ENCODE measurements at regions of chr20 and their contacts with region 1.

Region 1: DNA sequence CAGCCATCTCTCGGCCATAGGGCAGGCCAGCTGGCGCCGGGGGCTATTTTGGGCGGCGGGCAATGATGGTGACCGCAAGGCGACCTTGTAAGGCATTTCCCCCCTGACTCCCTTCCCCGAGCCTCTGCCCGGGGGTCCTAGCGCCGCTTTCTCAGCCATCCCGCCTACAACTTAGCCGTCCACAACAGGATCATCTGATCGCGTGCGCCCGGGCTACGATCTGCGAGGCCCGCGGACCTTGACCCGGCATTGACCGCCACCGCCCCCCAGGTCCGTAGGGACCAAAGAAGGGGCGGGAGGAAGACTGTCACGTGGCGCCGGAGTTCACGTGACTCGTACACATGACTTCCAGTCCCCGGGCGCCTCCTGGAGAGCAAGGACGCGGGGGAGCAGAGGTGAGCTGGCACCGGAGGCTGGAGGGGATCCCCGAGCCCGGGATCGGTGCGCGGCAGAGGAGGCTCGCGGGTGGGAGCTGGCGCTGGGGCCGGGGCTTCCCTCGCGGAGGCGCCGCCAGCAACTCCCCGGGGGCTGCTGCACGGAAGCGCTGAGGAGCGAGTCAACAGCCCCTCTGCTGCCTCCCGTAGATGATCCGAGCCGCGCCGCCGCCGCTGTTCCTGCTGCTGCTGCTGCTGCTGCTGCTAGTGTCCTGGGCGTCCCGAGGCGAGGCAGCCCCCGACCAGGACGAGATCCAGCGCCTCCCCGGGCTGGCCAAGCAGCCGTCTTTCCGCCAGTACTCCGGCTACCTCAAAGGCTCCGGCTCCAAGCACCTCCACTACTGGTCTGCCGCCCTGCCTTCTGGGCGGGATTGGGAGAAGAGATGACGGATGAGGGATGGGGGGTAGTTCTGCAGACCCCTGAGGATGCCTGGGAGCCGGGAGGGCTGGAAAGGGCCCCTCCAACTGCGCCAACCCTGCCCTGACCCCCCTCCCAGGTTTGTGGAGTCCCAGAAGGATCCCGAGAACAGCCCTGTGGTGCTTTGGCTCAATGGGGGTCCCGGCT is at the starts of genes CTSA and NEURL2:
- DNase-seq: peak; percentile 93 to 97 (median 95)
- ATAC-seq: peak; percentile 77 to 91 (median 86)
- H3K4me3 ChIP-seq: peak within 1 kb of the TSS; percentile 53 to 98 (median 80)
- H3K27ac ChIP-seq: peak within 1 kb of the TSS; percentile 74 to 97 (median 90)
- H3K4me1 ChIP-seq: peaks cover 3 to 37% (median 23%) of the 10 kb centered on the region in 12 donors
- H3K27me3 ChIP-seq: no peaks in the 10 kb centered on the region
- CTCF ChIP-seq: peak in 2 of 12 donors; percentile 3 to 7
- POLR2A ChIP-seq: peak in 1 of 2 donors; percentile 68
- total RNA-seq, gene CTSA: 62.5 to 214 (median 129) TPM
- total RNA-seq, gene NEURL2: 3.5 to 14.8 (median 10.8) TPM

Region 2: DNA sequence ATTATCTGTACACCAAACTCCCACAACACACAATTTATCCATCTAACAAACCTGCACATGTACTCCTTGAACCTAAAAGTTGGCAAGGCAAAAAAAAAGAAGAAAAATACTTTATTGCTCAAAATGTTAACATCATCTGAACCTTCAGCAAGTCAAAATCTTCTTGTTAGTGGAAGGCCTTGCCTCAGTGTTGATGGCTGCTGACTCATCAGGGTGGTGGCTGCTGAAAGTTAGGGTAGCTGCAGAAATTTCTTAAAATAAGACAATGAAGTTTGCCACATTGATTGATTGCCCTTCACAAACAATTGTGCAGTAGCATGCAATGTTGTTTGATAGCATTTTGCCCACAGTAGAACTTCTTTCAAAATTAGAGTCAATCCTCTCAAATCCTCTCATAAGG is 218.5 kb before region 1 on chr20:
- intact Hi-C with region 1: no loop called
- DNase-seq: no peak
- ATAC-seq: no peak
- H3K4me3 ChIP-seq: no peak overlapping the region
- H3K27ac ChIP-seq: no peak overlapping the region
- H3K4me1 ChIP-seq: no peaks in the 10 kb centered on the region
- H3K27me3 ChIP-seq: peaks cover 0 to 7% (median 0%) of the 10 kb centered on the region in 9 donors
- CTCF ChIP-seq: no peak
- POLR2A ChIP-seq: no peak

Region 3: DNA sequence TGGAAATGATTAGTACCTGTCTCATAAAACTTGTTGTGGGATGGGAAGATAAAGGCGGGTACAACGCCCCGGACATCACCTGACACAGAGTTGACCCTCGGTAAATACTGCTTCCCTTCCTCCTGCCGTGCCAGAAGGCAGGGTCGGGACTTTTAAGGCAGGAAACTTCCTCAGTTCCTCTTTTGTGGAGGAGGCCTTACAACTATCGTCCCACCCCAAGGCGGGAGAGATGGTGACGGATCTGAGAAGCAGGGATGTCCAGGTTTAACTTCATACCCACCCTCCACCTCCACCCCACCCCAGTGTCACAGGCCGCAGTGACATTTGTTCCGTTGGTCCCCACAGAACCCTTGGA is 99.0 kb before region 1 on chr20:
- intact Hi-C with region 1: no loop called
- DNase-seq: peak in 2 of 5 donors; percentile 20 to 39
- ATAC-seq: peak in 3 of 4 donors; percentile 7 to 40 (median 33)
- H3K4me3 ChIP-seq: peak overlapping the region; percentile 73 to 99 (median 88)
- H3K27ac ChIP-seq: peak overlapping the region; percentile 70 to 97 (median 92)
- H3K4me1 ChIP-seq: peaks cover 0 to 24% (median 13%) of the 10 kb centered on the region in 12 donors
- H3K27me3 ChIP-seq: no peaks in the 10 kb centered on the region
- CTCF ChIP-seq: no peak
- POLR2A ChIP-seq: no peak

Region 4: DNA sequence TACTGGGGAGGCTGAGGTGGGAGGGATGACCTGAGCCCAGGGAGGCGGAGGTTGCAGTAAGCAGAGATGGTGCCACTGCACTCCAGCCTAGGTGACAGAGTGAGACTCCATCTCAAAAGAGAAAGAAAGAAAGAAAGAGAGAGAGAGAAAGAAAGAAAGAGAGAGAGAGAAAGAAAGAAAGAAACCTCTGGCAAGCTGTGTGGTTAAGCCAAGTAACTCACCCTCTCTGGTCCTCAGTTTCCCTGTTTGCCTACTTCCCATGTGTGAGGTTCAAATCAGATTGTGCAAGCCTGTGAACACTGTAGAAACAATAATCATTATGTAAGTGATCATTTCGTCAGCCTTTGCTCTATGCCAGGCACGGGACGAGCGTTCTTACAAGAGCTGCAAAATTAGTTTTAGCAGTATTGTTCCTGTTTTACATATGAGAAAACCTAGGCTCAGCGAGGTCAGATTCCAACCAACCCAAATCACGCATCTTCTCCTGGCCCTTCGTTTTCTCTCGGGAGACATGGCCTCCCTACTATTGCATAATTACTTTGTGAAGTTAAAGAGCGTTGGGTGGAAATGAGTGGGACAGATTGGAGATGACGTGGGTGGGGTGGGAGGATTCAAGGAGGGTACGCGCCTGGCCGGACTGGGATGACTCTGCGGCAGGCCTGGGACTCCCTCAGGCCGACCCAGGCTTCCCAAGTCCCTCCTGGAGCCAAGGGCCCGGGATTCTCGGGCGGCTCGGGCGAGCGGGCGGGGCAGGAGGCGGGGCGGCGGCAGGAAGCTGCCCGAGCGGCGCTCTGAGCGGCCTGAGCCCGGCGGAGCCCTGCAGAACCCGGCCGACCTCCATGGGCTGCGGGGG is 58.0 kb before region 1 on chr20 and contains the start of gene SNX21:
- intact Hi-C with region 1: loop called in 1 of 10 experiments (anchors 2 kb)
- DNase-seq: peak; percentile 88 to 95 (median 92)
- ATAC-seq: peak; percentile 84 to 92 (median 88)
- H3K4me3 ChIP-seq: peak within 1 kb of the TSS; percentile 54 to 90 (median 73)
- H3K27ac ChIP-seq: peak within 1 kb of the TSS; percentile 89 to 99 (median 95)
- H3K4me1 ChIP-seq: peaks cover 0 to 53% (median 36%) of the 10 kb centered on the region in 12 donors
- H3K27me3 ChIP-seq: no peaks in the 10 kb centered on the region
- CTCF ChIP-seq: no peak
- POLR2A ChIP-seq: peak in 1 of 2 donors; percentile 48
- total RNA-seq, gene SNX21: 14.1 to 45.6 (median 21.4) TPM

Region 5: DNA sequence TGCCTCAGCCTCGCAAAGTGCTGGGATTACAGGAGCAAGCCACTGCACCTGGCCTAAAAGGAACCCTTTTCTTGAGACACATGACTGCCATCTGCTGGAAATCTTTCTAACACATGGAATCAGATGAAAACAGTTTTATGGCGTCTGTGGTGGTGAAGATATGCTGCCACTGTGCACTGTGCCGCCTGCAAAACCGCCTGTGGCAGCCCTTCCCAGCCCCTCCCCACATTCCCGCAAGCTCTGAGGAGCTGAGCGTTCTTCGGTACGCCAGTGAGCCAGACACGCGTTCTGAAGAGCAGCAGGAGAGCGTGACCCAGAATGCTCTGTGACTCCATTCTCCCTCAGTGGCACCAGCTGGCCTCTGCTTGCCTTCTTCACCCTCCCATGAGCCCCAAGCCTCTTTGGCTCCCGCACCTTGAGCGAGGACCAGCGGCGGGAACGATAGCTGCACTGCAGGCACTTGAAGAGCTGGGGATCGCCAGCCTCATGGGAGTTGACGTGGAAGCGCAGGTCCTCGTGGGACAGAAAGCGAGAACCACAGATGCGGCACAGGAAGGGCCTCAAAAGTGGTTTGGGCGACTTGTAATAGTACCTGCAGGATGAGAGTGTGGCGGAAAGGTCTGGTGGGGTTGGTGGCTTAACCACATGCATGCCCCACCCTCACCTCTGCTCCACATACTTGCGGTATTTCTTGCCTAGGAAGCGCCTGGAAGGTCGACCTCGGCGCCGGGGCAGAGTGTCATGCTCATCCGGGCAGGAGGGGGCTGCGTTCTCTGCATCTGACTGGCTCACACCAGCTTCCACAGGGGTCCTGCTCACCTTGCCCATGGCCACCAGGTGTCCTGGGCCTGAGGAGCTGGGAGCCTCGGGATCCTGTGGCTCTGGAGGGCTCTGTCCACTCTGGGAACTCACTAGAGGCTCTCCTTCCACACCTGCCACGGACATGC is 72.0 kb after region 1 on chr20:
- intact Hi-C with region 1: loop called in 3 of 10 experiments (anchors 5 to 10 kb)
- DNase-seq: peak in 1 of 5 donors; percentile 38
- ATAC-seq: peak in 2 of 4 donors; percentile 12 to 15
- H3K4me3 ChIP-seq: no peak overlapping the region
- H3K27ac ChIP-seq: no peak overlapping the region
- H3K4me1 ChIP-seq: no peaks in the 10 kb centered on the region
- H3K27me3 ChIP-seq: no peaks in the 10 kb centered on the region
- CTCF ChIP-seq: peak in 8 of 12 donors; percentile 23 to 49 (median 32)
- POLR2A ChIP-seq: no peak